B cell (primary cell): ENCODE measurements at regions of chr2 and their contacts with region 1.

Region 1: DNA sequence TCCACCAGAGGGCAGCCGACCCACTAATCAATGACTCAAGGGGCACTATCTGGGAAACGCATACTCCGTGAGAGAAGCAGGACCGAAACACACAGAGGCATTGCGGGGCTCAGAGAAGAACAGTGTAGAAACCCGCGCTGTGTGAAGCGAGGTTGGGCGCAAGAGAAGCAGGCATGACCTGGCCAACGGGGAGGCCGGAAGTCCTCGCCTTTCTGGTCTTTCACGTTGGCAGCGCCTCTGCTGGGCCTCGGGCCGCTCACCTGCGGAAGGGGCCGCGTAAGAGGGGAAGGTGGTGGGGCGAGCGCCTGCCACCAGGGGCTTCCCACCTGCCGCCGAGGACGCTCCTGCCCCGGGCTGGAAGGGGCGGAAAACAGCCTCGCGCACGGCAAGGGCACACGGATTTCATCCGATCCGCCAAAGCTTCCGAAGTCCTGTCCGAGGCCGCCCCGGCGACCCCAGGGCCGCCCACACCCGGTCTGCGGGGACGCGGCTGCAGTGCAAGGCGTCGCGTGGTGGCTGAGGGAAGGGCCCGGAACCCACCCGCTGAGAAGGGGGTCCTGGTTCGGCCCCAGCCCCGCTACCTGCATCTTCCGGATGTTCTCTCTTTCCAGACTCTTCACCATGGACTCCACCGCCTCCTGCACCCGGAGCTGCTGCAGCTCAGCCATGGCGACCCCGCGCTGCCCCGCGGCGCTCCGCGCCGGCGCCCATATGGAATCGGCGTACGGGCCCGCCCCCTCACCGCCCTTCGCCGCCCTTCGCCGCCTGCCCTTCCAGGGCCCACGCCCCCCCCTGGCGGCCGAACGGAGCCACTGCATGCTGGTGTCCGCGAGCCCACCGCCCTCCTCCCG is at the start of gene FAM136A:
- DNase-seq: peak; percentile 91
- ATAC-seq: peak; percentile 93
- H3K4me3 ChIP-seq: peak within 1 kb of the TSS; percentile 61 to 98 (median 71)
- H3K4me3 Mint-ChIP-seq: peak within 1 kb of the TSS; percentile 94
- H3K27ac ChIP-seq: peak within 1 kb of the TSS; percentile 77 to 85
- H3K27ac Mint-ChIP-seq: peak within 1 kb of the TSS; percentile 95
- H3K4me1 ChIP-seq: peaks cover 7 to 14% of the 10 kb centered on the region in 2 donors
- H3K4me1 Mint-ChIP-seq: peaks cover 22% of the 10 kb centered on the region
- H3K27me3 ChIP-seq: no peaks in the 10 kb centered on the region
- H3K27me3 Mint-ChIP-seq: no peaks in the 10 kb centered on the region
- CTCF ChIP-seq: peak; percentile 81
- total RNA-seq, gene FAM136A: 41.6 and 41.7 TPM in 2 replicates

Region 2: DNA sequence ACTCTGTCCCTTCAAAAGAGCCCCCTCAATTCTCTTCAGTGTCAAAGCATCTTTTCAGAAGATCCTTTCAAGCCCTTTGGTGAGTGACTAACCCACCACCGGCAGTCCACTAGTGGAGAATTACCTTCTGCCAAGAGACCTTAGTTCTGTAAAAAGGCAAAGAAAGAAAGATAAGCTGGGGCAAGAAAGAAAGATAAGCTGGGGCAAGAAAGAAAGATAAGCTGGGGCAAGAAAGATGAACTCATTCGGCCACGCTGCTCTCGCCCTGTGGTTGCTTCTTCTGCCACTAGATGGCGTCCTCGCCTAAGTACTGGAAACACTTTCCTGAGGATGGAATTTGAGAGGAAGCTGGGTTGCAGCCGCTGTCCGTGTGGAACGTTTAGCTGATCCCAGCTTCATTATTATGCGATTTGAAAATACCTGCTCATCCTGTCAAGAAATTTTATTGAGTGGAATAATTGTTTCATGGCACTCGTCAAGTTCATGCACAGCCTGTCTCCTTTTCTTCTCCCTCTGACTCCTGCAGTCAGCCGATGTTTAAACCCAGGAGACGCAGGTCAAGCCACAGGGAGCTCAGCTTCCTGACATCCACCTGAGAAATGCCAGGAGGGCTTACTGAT is 576.9 kb before region 1 on chr2:
- CTCF ChIA-PET with region 1: interaction called, 11 read pairs
- POLR2A ChIA-PET with region 1: no interaction called
- intact Hi-C with region 1: loop called (anchors 5 kb)
- DNase-seq: peak; percentile 86
- ATAC-seq: peak; percentile 74
- H3K4me3 ChIP-seq: peak overlapping the region in 4 of 5 experiments; percentile 27 to 44 (median 31)
- H3K4me3 Mint-ChIP-seq: peak overlapping the region; percentile 64
- H3K27ac ChIP-seq: no peak overlapping the region
- H3K27ac Mint-ChIP-seq: no peak overlapping the region
- H3K4me1 ChIP-seq: peaks cover 3 to 7% of the 10 kb centered on the region in 2 donors
- H3K4me1 Mint-ChIP-seq: peaks cover 7% of the 10 kb centered on the region
- H3K27me3 ChIP-seq: no peaks in the 10 kb centered on the region
- H3K27me3 Mint-ChIP-seq: peaks cover 6% of the 10 kb centered on the region
- CTCF ChIP-seq: peak; percentile 100

Region 3: DNA sequence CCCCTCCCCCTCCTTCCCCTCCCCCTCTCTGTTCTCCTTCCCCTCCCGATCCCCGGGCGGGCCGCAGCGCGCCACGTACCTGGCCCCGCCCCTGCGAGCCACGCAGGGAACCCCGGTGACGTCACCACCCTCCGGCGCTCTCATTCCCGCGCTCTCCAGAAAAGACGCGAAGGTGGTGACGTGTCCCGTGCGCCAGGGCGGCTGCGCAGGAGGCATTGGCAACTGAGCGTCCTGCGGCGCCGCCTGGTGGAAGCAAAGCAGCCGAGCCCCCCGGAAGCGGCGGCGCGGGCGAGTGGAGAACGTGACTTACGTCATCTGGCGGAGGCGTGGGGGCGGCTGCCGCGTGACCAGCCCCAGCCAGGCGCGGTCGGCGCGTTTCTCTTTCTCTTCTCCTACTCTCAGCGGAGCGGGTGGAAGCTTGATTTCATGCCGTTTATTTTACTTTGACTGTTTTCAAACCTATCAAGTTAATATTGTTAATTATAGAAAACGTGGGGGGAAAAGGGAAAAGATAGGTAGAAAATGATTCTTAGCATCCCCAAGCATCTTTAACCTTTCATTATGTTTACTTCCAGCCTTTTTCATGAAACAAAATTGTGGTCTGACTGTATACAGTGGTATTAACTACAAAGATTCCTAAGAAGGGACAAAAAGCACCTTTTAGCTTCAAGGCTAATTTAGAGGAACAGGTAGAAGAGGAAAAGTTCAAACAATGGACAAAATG is 158.8 kb before region 1 on chr2:
- CTCF ChIA-PET with region 1: interaction called, 4 read pairs
- POLR2A ChIA-PET with region 1: interaction called, 4 read pairs
- intact Hi-C with region 1: loop called (anchors 1 kb)
- DNase-seq: peak; percentile 100
- ATAC-seq: peak; percentile 75
- H3K4me3 ChIP-seq: peak overlapping the region; percentile 61 to 91 (median 71)
- H3K4me3 Mint-ChIP-seq: peak overlapping the region; percentile 91
- H3K27ac ChIP-seq: peak overlapping the region; percentile 97 to 98
- H3K27ac Mint-ChIP-seq: peak overlapping the region; percentile 98
- H3K4me1 ChIP-seq: peaks cover 24 to 32% of the 10 kb centered on the region in 2 donors
- H3K4me1 Mint-ChIP-seq: peaks cover 50% of the 10 kb centered on the region
- H3K27me3 ChIP-seq: no peaks in the 10 kb centered on the region
- H3K27me3 Mint-ChIP-seq: no peaks in the 10 kb centered on the region
- CTCF ChIP-seq: peak; percentile 88

Region 4: GRCh38 chr2:70258532-70258874 is 43.1 kb before region 1 on chr2:
- CTCF ChIA-PET with region 1: interaction called, 14 read pairs
- POLR2A ChIA-PET with region 1: interaction called, 3 read pairs
- intact Hi-C with region 1: no loop called
- DNase-seq: no peak
- ATAC-seq: no peak
- H3K4me3 ChIP-seq: peak overlapping the region in 4 of 5 experiments; percentile 54 to 81 (median 70)
- H3K4me3 Mint-ChIP-seq: peak overlapping the region; percentile 97
- H3K27ac ChIP-seq: peak overlapping the region in 1 of 2 donors; percentile 14
- H3K27ac Mint-ChIP-seq: peak overlapping the region; percentile 90
- H3K4me1 ChIP-seq: peaks cover 6 to 12% of the 10 kb centered on the region in 2 donors
- H3K4me1 Mint-ChIP-seq: peaks cover 18% of the 10 kb centered on the region
- H3K27me3 ChIP-seq: no peaks in the 10 kb centered on the region
- H3K27me3 Mint-ChIP-seq: no peaks in the 10 kb centered on the region
- CTCF ChIP-seq: no peak

Region 5: GRCh38 chr2:70460333-70460732 is 158.8 kb after region 1 on chr2:
- CTCF ChIA-PET with region 1: no interaction called
- POLR2A ChIA-PET with region 1: no interaction called
- intact Hi-C with region 1: no loop called
- DNase-seq: no peak
- ATAC-seq: no peak
- H3K4me3 ChIP-seq: no peak overlapping the region
- H3K4me3 Mint-ChIP-seq: no peak overlapping the region
- H3K27ac ChIP-seq: no peak overlapping the region
- H3K27ac Mint-ChIP-seq: no peak overlapping the region
- H3K4me1 ChIP-seq: no peaks in the 10 kb centered on the region
- H3K4me1 Mint-ChIP-seq: no peaks in the 10 kb centered on the region
- H3K27me3 ChIP-seq: no peaks in the 10 kb centered on the region
- H3K27me3 Mint-ChIP-seq: peaks cover 15% of the 10 kb centered on the region
- CTCF ChIP-seq: no peak

Region 6: GRCh38 chr2:70583091-70583490 is 281.5 kb after region 1 on chr2:
- CTCF ChIA-PET with region 1: no interaction called
- POLR2A ChIA-PET with region 1: no interaction called
- intact Hi-C with region 1: no loop called
- DNase-seq: no peak
- ATAC-seq: no peak
- H3K4me3 ChIP-seq: no peak overlapping the region
- H3K4me3 Mint-ChIP-seq: no peak overlapping the region
- H3K27ac ChIP-seq: no peak overlapping the region
- H3K27ac Mint-ChIP-seq: no peak overlapping the region
- H3K4me1 ChIP-seq: no peaks in the 10 kb centered on the region
- H3K4me1 Mint-ChIP-seq: no peaks in the 10 kb centered on the region
- H3K27me3 ChIP-seq: peaks cover 0 to 2% (median 0%) of the 10 kb centered on the region in 4 experiments
- H3K27me3 Mint-ChIP-seq: peaks cover 16% of the 10 kb centered on the region
- CTCF ChIP-seq: no peak

Region 7: DNA sequence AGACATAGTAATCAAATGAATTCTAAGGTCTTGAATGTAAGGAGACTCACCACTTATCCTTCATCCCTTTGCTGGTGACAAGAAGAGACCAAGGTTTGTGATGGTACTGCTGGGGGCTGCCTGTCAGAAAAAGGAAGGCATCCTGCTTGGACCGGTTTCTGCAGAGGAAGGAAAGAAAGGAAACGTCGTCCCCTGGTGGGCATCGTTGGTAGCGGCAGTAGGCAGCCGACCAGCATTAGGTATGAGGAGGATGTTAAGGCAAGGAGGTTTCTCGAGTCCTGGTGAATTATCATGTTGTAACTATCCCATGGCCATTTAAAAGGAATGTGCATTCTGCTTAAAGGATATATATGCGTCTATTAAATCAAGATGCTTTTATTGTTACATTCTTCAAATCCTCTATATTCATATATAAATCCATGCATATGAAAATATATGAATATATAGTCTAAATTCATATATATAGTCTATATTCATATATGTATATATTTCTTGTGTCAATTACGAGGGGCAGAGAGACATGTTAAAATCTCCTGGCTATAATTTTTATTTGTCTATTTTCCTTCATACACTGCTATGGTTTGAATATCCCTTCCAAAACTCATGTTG is 346.4 kb after region 1 on chr2:
- CTCF ChIA-PET with region 1: interaction called, 60 read pairs
- POLR2A ChIA-PET with region 1: no interaction called
- intact Hi-C with region 1: no loop called
- DNase-seq: peak; percentile 73
- ATAC-seq: peak; percentile 77
- H3K4me3 ChIP-seq: no peak overlapping the region
- H3K4me3 Mint-ChIP-seq: no peak overlapping the region
- H3K27ac ChIP-seq: no peak overlapping the region
- H3K27ac Mint-ChIP-seq: no peak overlapping the region
- H3K4me1 ChIP-seq: no peaks in the 10 kb centered on the region
- H3K4me1 Mint-ChIP-seq: no peaks in the 10 kb centered on the region
- H3K27me3 ChIP-seq: peaks cover 0 to 13% (median 9%) of the 10 kb centered on the region in 4 experiments
- H3K27me3 Mint-ChIP-seq: peaks cover 22% of the 10 kb centered on the region
- CTCF ChIP-seq: peak; percentile 98